ENCODE measurements at regions of chr16 and their contacts with region 1.

Region 1: GRCh38 chr16:75282466-75283288 is 31.3 kb upstream of the BCAR1 start:
- DNase-seq: no peak
- ATAC-seq: peak in 1 of 2 experiments; percentile 33; a peak in 2 of 6 replicates
- H3K4me3 ChIP-seq: no peak overlapping the region
- H3K27ac ChIP-seq: no peak overlapping the region
- H3K4me1 ChIP-seq: no peaks in the 10 kb centered on the region
- CTCF ChIP-seq: no peak
- EP300 ChIP-seq: no peak
- POLR2A ChIP-seq: no peak
- RAD21 ChIP-seq: no peak

Region 2: GRCh38 chr16:75272097-75272551 is 10.6 kb before region 1 on chr16:
- CTCF ChIA-PET with region 1: interaction called, 10 read pairs
- POLR2A ChIA-PET with region 1: no interaction called
- DNase-seq: no peak
- ATAC-seq: no peak
- H3K4me3 ChIP-seq: no peak overlapping the region
- H3K27ac ChIP-seq: no peak overlapping the region
- H3K4me1 ChIP-seq: peaks cover 29% of the 10 kb centered on the region
- CTCF ChIP-seq: no peak
- EP300 ChIP-seq: no peak
- POLR2A ChIP-seq: no peak
- RAD21 ChIP-seq: no peak